K562 (cell line): ENCODE measurements at regions of chr2 and their contacts with region 1.

Region 1: DNA sequence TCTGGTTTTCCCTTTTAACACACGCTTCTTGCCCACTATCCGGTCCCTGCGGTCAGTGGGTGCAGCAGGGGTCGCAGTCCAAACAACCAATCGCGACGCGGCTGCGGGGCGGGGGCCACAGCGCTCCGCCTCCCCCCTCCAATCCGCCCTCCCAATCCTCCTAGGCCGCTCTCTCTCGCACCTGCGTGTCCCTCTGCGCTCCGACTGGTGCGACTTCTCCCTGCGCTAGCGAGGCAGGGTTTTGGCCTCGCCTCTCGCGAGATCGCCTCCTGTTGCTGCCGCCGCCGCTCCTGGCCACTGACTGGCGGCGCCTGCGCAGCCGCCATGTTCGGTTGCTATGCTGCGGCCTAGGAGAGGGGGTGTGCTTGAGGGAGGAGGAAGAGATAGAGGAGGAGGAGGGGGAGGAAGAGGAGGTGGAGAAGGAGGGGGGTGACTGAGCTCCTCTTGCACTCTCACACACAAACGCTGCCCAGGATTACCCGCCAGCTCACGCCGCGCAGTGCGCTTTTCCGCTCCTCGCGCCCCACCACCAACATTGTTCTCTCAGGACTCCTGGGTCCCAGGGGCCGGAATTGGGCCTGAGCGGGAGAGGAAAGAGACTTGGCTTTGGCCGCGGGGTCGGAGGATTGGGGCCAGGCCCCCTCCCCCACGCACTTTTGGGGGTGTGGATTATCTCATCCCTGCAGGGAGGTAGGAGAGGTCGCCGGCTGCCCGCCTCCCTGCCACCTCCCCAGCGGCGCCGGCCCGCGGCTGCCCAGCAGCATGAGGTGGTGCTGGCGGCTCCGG is at the start of gene PTPN4:
- DNase-seq: peak; percentile 93 to 99 (median 96)
- ATAC-seq: peak; percentile 92
- H3K4me3 ChIP-seq: peak within 1 kb of the TSS; percentile 75
- H3K27ac ChIP-seq: peak within 1 kb of the TSS; percentile 96
- H3K4me1 ChIP-seq: peaks cover 9 to 19% of the 10 kb centered on the region in 2 experiments
- H3K27me3 ChIP-seq: no peaks in the 10 kb centered on the region
- CTCF ChIP-seq: peak in 1 of 3 experiments; percentile 45; a peak in 2 of 6 replicates
- EP300 ChIP-seq: peak; percentile 26; the same call in 1 of the 2 replicates
- POLR2A ChIP-seq: peak; percentile 91
- RAD21 ChIP-seq: peak in 1 of 2 experiments; percentile 20; a peak in 1 of 4 replicates
- polyA plus RNA-seq, gene PTPN4: 5.0 to 7.1 TPM

Region 2: GRCh38 chr2:119771331-119771730 is 11.7 kb after region 1 on chr2:
- CTCF ChIA-PET with region 1: no interaction called
- POLR2A ChIA-PET with region 1: interaction called, 12 read pairs
- in situ Hi-C with region 1: no loop called
- intact Hi-C with region 1: no loop called
- DNase-seq: peak in 2 of 4 experiments; percentile 23 to 41
- ATAC-seq: peak; percentile 69
- H3K4me3 ChIP-seq: no peak overlapping the region
- H3K27ac ChIP-seq: no peak overlapping the region
- H3K4me1 ChIP-seq: no peaks in the 10 kb centered on the region; a peak in 1 of 5 replicates
- H3K27me3 ChIP-seq: no peaks in the 10 kb centered on the region
- CTCF ChIP-seq: no peak
- EP300 ChIP-seq: no peak
- POLR2A ChIP-seq: no peak
- RAD21 ChIP-seq: no peak

Region 3: DNA sequence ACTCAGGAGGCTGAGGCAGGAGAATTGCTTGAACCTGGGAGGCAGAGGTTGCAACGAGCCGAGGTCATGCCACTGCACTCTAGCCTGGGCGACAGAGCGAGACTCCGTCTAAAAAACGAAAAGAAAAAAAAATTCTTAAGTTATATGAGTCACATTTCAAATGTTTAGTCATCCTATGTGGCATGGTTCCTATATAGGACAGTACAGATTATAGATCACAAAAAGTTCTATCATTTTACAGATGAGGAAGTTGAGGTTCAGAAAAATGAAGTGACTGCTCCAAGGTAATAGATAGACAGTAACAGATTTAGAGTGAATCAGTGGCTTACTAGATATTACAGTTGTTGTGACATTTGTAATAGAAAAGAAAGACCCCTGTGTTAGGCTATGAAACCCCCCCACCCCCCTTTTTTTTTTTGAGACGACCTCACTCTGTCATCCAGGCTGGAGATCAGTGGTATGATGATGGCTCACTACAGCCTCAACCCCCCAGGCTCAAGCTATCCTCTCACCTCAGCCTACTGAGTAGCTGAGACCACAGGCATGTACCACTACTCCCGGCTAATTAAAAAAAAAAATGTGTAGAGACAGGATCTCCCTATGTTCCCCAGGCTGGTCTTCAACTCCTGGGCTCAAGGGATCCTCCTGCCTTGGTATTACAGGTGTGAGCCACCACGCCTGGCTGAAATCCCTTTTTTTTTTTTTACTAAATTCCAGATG is 22.8 kb after region 1 on chr2:
- CTCF ChIA-PET with region 1: no interaction called
- POLR2A ChIA-PET with region 1: interaction called, 10 read pairs
- in situ Hi-C with region 1: no loop called
- intact Hi-C with region 1: no loop called
- DNase-seq: no peak
- ATAC-seq: no peak; the same call in 2 of the 3 replicates
- H3K4me3 ChIP-seq: no peak overlapping the region
- H3K27ac ChIP-seq: no peak overlapping the region
- H3K4me1 ChIP-seq: no peaks in the 10 kb centered on the region
- H3K27me3 ChIP-seq: no peaks in the 10 kb centered on the region
- CTCF ChIP-seq: no peak
- EP300 ChIP-seq: no peak
- POLR2A ChIP-seq: no peak
- RAD21 ChIP-seq: no peak

Region 4: DNA sequence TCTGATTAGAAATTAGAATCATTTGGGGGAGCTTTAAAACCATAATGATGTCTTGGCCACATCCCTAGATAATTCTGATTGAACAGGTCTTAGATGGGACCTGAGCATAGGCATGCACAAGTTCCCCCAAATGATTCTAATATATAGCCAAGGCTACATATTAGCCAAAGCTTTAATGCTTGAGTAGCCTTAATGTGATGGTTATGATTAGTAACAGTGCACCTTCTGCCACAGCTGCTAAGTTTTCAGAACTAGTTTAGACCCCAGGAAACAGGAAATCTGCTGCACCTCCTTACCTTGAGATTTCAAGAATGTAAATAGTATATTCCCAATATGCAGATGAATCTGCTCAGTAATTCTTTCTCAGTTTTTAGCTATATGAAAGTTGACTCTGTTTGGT is 119.9 kb after region 1 on chr2:
- CTCF ChIA-PET with region 1: no interaction called
- POLR2A ChIA-PET with region 1: no interaction called
- in situ Hi-C with region 1: no loop called
- intact Hi-C with region 1: no loop called
- DNase-seq: no peak
- ATAC-seq: no peak
- H3K4me3 ChIP-seq: no peak overlapping the region
- H3K27ac ChIP-seq: no peak overlapping the region
- H3K4me1 ChIP-seq: no peaks in the 10 kb centered on the region
- H3K27me3 ChIP-seq: no peaks in the 10 kb centered on the region
- CTCF ChIP-seq: no peak
- EP300 ChIP-seq: no peak
- POLR2A ChIP-seq: no peak
- RAD21 ChIP-seq: no peak